ENCODE measurements at regions of chr7 and their contacts with region 1.

Region 1: DNA sequence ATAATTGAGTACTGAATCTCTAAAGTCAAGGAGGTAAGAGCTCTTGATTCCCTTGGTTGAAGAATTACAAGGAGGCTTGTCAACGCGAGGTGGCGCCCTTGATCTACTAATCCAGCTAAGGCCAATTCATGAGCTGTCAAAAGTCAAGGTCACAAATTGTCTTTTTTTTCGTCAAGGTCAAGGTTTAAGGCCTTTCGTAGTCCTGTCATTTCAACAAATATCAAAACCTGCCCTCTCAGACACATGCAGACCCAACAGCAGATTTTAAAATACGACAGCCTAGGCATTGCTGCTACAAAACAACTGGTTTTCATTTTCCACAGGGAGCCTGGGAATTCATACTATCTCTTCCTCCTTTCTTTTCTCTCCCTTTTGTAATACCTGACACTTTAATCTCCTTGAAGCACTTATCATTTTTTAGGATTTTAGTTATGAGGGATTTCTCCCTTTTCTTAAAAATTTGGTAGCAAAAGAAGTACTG is 3.6 kb downstream of the HOXA13 start:
- DNase-seq: peak; percentile 91
- ATAC-seq: peak; percentile 53

Region 2: GRCh38 chr7:27339478-27339877 is 143.2 kb after region 1 on chr7:
- intact Hi-C with region 1: no loop called
- DNase-seq: no peak
- ATAC-seq: no peak

Region 3: DNA sequence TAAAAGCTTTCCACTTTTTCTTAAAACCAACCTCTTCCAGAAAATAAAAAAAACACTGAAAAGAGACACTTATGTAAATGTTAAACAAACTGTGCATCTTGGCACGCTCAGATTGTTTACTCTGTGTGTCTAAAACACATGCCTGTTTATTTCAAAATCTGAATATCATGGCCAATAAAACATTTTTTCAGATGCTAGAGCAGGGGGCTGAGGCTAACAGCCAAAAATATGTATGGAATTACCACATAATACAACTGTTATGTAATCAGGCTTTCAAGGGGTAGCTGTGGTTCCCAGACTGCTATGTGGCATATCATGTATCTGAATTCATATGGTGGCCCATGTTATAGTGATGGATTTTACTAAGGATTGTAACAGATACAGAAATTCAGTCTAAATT is 336.0 kb after region 1 on chr7:
- intact Hi-C with region 1: no loop called
- DNase-seq: no peak
- ATAC-seq: no peak

Region 4: DNA sequence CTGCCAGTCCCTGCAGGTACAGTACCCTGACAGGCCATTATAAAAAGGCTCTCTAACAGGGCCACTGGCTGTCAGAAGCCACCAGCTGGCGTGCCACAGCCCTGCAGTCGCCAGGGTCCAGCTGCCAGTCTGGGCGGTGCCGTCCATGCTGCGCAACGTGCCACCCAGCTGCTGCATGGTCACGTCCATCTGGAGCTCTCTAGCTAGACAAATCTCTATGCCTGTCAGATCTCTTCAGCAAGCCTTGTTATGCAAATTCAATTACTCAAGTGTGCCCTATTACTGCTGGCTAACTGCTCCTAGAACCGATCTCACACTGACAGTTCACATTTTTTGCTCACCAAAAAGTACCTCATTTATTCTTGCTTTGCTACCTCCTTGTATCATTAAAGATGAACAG is 390.5 kb after region 1 on chr7:
- intact Hi-C with region 1: loop called (anchors 10 kb)
- DNase-seq: no peak
- ATAC-seq: no peak

Region 5: GRCh38 chr7:27921081-27921836 is 724.9 kb after region 1 on chr7:
- intact Hi-C with region 1: loop called (anchors 10 kb)
- DNase-seq: no peak
- ATAC-seq: peak; percentile 68

Region 6: GRCh38 chr7:28020302-28020940 is 824.1 kb after region 1 on chr7:
- intact Hi-C with region 1: loop called (anchors 10 kb)
- DNase-seq: peak; percentile 73
- ATAC-seq: peak; percentile 76

Region 7: DNA sequence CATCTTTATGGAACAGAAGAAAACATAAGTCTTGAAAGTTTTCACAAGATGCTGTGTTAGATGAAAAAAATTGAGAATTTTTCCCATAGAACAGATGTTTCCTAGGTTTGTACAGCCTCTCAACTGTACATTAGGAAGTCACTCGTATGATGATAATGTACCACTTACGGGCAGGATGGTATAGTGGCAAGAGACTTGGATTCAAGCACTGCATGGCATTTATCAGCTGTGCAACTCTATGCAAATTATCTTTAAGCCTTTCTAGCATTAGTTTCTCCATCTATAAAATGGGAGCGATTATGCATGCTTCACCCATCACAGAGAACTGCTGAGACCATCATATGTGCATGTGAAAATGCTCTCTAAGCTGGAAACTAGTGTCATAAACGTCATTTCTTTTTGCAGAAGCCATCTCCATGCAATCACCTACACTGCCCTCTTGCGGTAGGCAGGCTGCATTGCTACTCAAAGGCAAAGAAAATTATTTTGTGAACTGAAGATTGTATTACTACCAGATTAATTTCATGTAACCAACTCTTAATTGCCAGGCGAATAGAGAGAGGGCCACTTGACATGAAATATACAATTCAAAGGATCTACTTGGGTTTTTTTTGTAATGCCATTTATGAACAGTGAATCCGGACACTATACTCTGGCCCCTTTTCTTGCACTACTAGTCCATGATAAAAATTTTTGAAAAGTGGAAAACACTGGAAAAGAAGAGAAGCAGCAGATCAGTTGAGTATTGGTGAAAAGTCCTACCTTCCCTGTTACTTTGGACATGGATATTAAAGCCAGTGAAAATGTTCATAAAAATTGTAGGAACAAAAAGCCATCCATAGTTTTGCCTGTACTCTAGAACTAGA is 881.9 kb after region 1 on chr7:
- intact Hi-C with region 1: loop called (anchors 10 kb)
- DNase-seq: no peak
- ATAC-seq: peak; percentile 47

Measured in Right ventricle myocardium superior (tissue), 1 donor.